ENCODE measurements at regions of chr3 and their contacts with region 1.

Region 1: DNA sequence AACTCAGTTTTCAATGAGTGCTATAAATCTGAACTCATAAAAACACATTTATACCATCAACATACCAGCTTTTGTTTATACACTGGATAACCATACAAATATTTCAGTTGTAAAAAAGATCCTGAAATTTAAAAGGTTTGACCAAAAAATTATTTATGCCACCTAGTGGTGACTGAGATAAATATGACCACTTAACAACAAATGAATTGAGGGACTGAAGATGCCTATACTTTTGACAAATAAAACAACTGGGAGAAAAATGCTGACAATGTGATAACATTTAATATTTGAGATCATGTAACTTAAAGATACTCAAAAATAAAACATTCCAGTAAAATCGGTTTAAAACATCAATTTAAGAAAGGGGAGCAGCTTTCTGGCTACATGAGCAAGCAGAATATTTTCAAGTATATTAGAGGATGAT is 30.4 kb downstream of the ATG3 start:
- DNase-seq: no peak
- H3K4me3 ChIP-seq: no peak overlapping the region
- H3K27ac ChIP-seq: no peak overlapping the region
- H3K4me1 ChIP-seq: no peaks in the 10 kb centered on the region
- H3K27me3 ChIP-seq: no peaks in the 10 kb centered on the region
- CTCF ChIP-seq: peak; percentile 41 to 57 (median 49)
- POLR2A ChIP-seq: no peak

Region 2: DNA sequence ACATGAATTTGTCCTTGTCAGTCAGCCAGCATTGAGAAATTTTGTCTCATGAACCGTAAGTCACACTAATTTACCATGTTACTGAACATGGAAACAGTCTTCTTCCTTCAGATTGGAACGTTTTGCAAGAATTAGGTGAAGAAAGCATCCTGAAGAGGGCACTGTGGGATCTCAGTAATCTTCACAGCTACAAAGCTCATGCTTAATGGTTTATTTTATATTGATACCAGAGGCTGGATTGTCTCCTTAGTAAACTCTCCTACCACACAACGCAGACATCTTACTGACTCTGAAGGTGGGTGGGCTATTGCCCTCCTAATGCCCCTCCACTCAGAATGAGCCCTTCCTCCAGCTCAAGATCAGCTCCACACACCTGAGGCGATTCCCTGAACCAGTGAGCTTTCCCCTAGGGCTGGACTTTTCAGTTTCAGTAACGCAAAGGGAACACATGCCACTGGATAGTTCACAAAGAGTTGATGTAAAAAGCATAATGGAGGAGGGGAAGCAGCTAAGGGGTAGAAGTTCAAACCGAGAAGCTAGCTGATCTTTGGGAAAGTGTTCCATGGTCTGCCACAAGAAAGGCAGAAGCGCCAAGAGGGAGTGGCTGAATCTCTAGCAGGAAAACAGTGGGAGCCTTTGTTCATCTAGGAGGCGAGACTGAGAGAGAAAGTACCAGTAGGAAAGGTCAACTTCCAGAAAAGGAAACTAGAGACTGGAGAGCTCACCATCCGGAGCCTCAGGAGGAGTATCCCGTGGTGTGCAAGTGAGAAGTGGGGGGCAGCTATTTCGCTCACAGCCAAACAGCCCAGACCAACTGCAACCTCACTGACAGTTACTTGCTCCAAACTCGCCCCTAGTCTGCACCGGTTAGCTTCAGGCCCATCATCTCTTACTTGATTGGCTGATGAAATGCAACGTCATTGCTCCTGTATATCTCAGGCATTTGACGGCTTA is 237.7 kb before region 1 on chr3 and contains the start of gene SLC9C1:
- intact Hi-C with region 1: loop called (anchors 10 kb)
- DNase-seq: peak; percentile 74
- H3K4me3 ChIP-seq: peak within 1 kb of the TSS; percentile 29 to 56
- H3K27ac ChIP-seq: peak within 1 kb of the TSS; percentile 72 to 78
- H3K4me1 ChIP-seq: no peaks in the 10 kb centered on the region
- H3K27me3 ChIP-seq: no peaks in the 10 kb centered on the region
- CTCF ChIP-seq: peak; percentile 45 to 67 (median 51)
- POLR2A ChIP-seq: no peak
- total RNA-seq, gene SLC9C1: 3.0 to 9.8 TPM

Region 3: DNA sequence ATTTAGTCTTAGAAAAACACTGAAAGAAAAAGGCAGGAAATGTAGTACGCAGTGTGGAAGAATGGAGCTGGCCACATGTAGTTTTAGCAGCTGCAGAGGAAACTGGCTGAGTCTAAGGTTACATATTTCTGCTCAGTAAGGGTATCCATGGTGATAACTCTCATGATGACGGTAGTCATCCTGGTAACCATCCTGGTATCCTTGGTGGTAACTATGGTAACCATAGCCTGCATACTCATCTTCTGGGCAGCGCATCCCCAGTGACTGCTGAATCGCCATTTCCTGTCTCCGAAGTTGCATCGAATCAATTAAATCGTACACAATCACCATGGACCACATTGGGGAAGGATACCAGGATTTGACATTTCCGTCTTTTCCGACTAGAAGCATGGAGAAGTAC is 73.9 kb after region 1 on chr3:
- intact Hi-C with region 1: no loop called
- DNase-seq: no peak
- H3K4me3 ChIP-seq: no peak overlapping the region
- H3K27ac ChIP-seq: no peak overlapping the region
- H3K4me1 ChIP-seq: peaks cover 4% of the 10 kb centered on the region
- H3K27me3 ChIP-seq: no peaks in the 10 kb centered on the region
- CTCF ChIP-seq: no peak
- POLR2A ChIP-seq: no peak